ENCODE measurements at regions of chr7 and their contacts with region 1.

Region 1: GRCh38 chr7:112858838-112859237 is 68.6 kb upstream of the TMEM168 start:
- DNase-seq: no peak
- ATAC-seq: no peak
- H3K4me3 Mint-ChIP-seq: no peak overlapping the region
- H3K27ac Mint-ChIP-seq: no peak overlapping the region
- H3K4me1 Mint-ChIP-seq: no peaks in the 10 kb centered on the region
- H3K27me3 Mint-ChIP-seq: no peaks in the 10 kb centered on the region
- CTCF ChIP-seq: no peak

Region 2: DNA sequence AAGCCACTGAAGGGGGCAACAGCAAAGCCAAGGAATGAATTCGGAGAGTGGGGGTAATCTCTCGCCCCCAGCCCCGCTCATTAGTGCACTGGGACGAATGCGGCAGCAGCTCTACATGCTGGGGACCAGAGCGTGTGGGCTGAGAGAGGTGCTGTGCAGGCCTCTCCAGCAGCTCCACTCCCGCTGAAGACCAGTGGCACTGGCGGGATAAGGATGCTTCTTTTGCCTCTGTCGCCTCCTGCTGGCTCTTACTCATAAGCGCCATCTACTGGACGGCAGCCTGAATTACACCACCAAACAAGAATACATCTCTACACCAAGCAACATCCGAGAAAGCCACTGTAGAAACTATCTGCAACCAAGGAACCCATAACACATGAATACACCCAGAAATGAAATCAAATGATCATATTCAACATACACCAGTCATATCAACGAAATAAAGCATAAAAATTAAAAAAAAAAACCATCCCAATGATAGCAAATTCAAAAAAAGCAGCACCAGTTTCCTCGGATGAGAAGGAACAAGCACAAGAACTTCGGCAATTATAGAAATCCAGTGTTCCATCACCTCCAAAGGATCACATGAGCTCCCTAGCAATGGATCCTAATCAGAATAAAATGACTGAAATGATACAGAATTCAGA is 10.4 kb after region 1 on chr7:
- CTCF ChIA-PET with region 1: interaction called, 20 read pairs
- POLR2A ChIA-PET with region 1: interaction called, 3 read pairs
- intact Hi-C with region 1: no loop called
- DNase-seq: peak; percentile 68
- ATAC-seq: peak; percentile 81
- H3K4me3 Mint-ChIP-seq: no peak overlapping the region
- H3K27ac Mint-ChIP-seq: no peak overlapping the region
- H3K4me1 Mint-ChIP-seq: peaks cover 24% of the 10 kb centered on the region
- H3K27me3 Mint-ChIP-seq: no peaks in the 10 kb centered on the region
- CTCF ChIP-seq: peak; percentile 91

Region 3: GRCh38 chr7:112886208-112886607 is 27.4 kb after region 1 on chr7:
- CTCF ChIA-PET with region 1: no interaction called
- POLR2A ChIA-PET with region 1: no interaction called
- intact Hi-C with region 1: no loop called
- DNase-seq: no peak
- ATAC-seq: no peak
- H3K4me3 Mint-ChIP-seq: no peak overlapping the region
- H3K27ac Mint-ChIP-seq: no peak overlapping the region
- H3K4me1 Mint-ChIP-seq: peaks cover 6% of the 10 kb centered on the region
- H3K27me3 Mint-ChIP-seq: no peaks in the 10 kb centered on the region
- CTCF ChIP-seq: no peak

Region 4: GRCh38 chr7:113026941-113027340 is 168.1 kb after region 1 on chr7:
- CTCF ChIA-PET with region 1: no interaction called
- POLR2A ChIA-PET with region 1: no interaction called
- intact Hi-C with region 1: no loop called
- DNase-seq: no peak
- ATAC-seq: no peak
- H3K4me3 Mint-ChIP-seq: no peak overlapping the region
- H3K27ac Mint-ChIP-seq: no peak overlapping the region
- H3K4me1 Mint-ChIP-seq: no peaks in the 10 kb centered on the region
- H3K27me3 Mint-ChIP-seq: peaks cover 9% of the 10 kb centered on the region
- CTCF ChIP-seq: no peak